Activated T-helper 1 cell treated with anti-CD3 and anti-CD28 coated beads, Interleukin-12 subunit alpha, Interleukin-12 subunit beta, Interleukin-2, Interleukin-4 antibody, amounts not matched to agents 30 ng/mL and 10 ng/mL and 1 ng/mL, durations not matched to agents 14 hours and 24 hours and 36 hours (primary cell): ENCODE measurements at regions of chr1 and their contacts with region 1.

Region 1: GRCh38 chr1:26363549-26364448 is 8.8 kb downstream of the ZNF683 start:
- DNase-seq: peak; percentile 74
- H3K4me3 Mint-ChIP-seq: no peak overlapping the region
- H3K27ac Mint-ChIP-seq: no peak overlapping the region
- H3K4me1 Mint-ChIP-seq: peaks cover 46% of the 10 kb centered on the region
- H3K27me3 Mint-ChIP-seq: peaks cover 39% of the 10 kb centered on the region

Region 2: GRCh38 chr1:26284597-26285360 is 79.0 kb before region 1 on chr1:
- intact Hi-C with region 1: loop called (anchors 2 kb)
- DNase-seq: peak; percentile 88
- H3K4me3 Mint-ChIP-seq: peak overlapping the region; percentile 81
- H3K27ac Mint-ChIP-seq: peak overlapping the region; percentile 97
- H3K4me1 Mint-ChIP-seq: peaks cover 70% of the 10 kb centered on the region
- H3K27me3 Mint-ChIP-seq: no peaks in the 10 kb centered on the region

Region 3: GRCh38 chr1:26417111-26417759 is 53.4 kb after region 1 on chr1:
- intact Hi-C with region 1: loop called (anchors 2 kb)
- DNase-seq: peak; percentile 75
- H3K4me3 Mint-ChIP-seq: no peak overlapping the region
- H3K27ac Mint-ChIP-seq: no peak overlapping the region
- H3K4me1 Mint-ChIP-seq: no peaks in the 10 kb centered on the region
- H3K27me3 Mint-ChIP-seq: peaks cover 54% of the 10 kb centered on the region